ENCODE measurements at regions of chr3 and their contacts with region 1.

Region 1: GRCh38 chr3:96646596-96646995 is 167.8 kb upstream of the EPHA6 start:
- DNase-seq: no peak
- ATAC-seq: no peak
- H3K4me3 ChIP-seq: no peak overlapping the region
- H3K27ac ChIP-seq: no peak overlapping the region
- H3K4me1 ChIP-seq: no peaks in the 10 kb centered on the region
- H3K27me3 ChIP-seq: no peaks in the 10 kb centered on the region
- CTCF ChIP-seq: no peak

Region 2: GRCh38 chr3:96266395-96267190 is 380.0 kb before region 1 on chr3:
- CTCF ChIA-PET with region 1: no interaction called
- POLR2A ChIA-PET with region 1: no interaction called
- intact Hi-C with region 1: no loop called
- DNase-seq: peak; percentile 68
- ATAC-seq: peak; percentile 95
- H3K4me3 ChIP-seq: no peak overlapping the region
- H3K27ac ChIP-seq: no peak overlapping the region
- H3K4me1 ChIP-seq: peaks cover 18% of the 10 kb centered on the region; the same call in 1 of the 2 replicates
- H3K27me3 ChIP-seq: no peaks in the 10 kb centered on the region
- CTCF ChIP-seq: no peak

Region 3: DNA sequence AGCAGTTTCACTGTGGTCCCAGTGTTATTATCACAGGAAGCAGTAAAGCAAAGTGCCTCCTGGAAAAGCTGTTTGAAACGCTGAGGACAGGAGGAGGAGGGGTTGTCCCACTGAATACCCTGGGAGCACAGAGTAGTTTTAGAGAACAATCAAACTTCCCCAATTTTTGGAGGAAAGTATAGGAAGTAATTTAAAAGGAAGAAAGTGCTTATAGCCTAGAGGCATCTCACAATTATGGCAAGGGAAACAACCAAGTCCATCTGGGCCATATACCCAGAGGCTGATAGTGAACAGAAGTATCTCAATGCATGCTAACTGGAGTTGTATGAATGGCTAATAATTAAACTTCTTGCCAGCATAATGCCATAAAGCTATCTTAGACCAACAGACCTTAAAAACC is 30.6 kb after region 1 on chr3:
- CTCF ChIA-PET with region 1: no interaction called
- POLR2A ChIA-PET with region 1: no interaction called
- intact Hi-C with region 1: loop called (anchors 5 kb)
- DNase-seq: no peak
- ATAC-seq: no peak
- H3K4me3 ChIP-seq: no peak overlapping the region
- H3K27ac ChIP-seq: no peak overlapping the region
- H3K4me1 ChIP-seq: no peaks in the 10 kb centered on the region
- H3K27me3 ChIP-seq: no peaks in the 10 kb centered on the region
- CTCF ChIP-seq: no peak